MCF 10A (cell line): ENCODE measurements at regions of chr7 and their contacts with region 1.

Region 1: GRCh38 chr7:105652359-105652993 is 71.2 kb upstream of the EFCAB10 start:
- DNase-seq: peak; percentile 62
- H3K4me3 Mint-ChIP-seq: no peak overlapping the region
- H3K27ac Mint-ChIP-seq: no peak overlapping the region
- H3K4me1 Mint-ChIP-seq: peaks cover 10% of the 10 kb centered on the region
- H3K27me3 Mint-ChIP-seq: no peaks in the 10 kb centered on the region
- CTCF ChIP-seq: peak; percentile 79

Region 2: DNA sequence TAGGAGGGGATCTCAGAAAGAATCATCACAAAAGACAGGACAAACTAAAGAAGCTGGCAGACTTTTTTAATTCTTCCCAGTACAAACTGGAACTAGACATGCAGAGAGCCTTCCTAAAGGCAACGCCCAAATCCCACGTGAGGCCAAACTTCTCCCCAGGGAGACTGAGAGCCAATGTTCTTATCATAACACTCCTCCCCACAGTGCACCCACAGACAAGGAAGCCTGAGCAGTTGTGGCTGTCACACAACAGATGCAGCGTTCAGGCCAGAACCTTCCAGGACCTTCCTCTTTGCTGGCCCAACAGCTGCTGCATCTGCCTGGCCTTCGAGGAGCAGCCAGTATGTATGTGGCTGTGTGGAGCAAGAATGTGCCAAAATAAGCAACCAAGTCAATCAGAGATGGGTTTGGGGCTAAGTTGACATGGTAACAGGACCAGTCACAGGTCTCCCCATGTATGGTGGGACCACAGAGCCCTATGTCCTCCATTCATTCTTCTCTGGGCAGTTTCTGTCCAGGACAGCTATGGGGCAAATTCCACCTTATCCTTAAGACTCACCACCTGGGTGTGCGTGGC is 298.6 kb before region 1 on chr7:
- CTCF ChIA-PET with region 1: no interaction called
- POLR2A ChIA-PET with region 1: no interaction called
- intact Hi-C with region 1: no loop called
- DNase-seq: no peak
- H3K4me3 Mint-ChIP-seq: no peak overlapping the region
- H3K27ac Mint-ChIP-seq: no peak overlapping the region
- H3K4me1 Mint-ChIP-seq: peaks cover 32% of the 10 kb centered on the region
- H3K27me3 Mint-ChIP-seq: no peaks in the 10 kb centered on the region
- CTCF ChIP-seq: no peak

Region 3: DNA sequence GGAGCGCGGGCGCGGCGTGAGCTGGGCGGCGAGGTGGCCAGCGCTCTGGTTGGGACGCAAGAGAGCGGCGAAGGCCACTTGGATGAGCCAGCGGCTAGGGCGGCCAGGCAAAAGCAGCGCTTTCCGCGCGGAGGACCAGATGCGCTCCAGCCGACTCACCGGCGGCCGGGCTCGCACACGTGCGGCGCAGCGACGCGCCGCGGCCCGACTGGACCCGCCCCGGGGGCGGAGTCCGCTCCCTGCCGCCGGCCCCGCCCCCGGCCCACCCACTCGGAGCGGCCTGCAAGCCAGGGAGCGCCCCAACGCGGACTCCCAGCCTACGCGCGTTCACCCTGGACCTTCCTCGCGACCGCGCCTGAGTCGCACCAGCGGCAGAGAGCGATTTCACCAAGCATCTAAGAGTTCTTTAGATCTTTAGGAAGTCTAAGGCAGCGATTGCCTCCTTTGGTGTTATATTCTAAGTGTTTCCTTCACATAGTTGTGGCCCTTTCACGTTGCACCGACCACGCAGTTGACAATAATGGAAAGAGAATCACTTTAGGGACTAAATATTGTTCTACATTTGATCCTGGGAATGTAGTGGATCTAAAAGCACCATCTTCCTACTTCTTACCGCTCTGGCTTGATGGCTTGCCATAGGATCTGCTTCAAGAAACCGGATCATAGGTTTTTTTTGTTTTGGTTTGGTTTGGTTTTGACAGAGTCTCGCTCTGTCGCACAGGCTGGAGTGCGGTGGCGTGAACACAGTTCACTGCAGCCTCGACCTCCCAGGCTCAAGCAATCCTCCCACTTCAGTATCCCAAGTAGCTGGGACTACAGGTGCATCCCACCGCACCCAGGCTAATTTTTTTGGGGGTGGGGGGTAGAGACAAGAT is 130.2 kb before region 1 on chr7 and contains the start of gene PUS7:
- CTCF ChIA-PET with region 1: no interaction called
- POLR2A ChIA-PET with region 1: no interaction called
- intact Hi-C with region 1: no loop called
- DNase-seq: peak; percentile 87
- H3K4me3 Mint-ChIP-seq: peak within 1 kb of the TSS; percentile 86
- H3K27ac Mint-ChIP-seq: no peak within 1 kb of the TSS
- H3K4me1 Mint-ChIP-seq: peaks cover 6% of the 10 kb centered on the region
- H3K27me3 Mint-ChIP-seq: no peaks in the 10 kb centered on the region
- CTCF ChIP-seq: no peak
- total RNA-seq, gene PUS7: 24.3 and 29.7 TPM in 2 replicates

Region 4: DNA sequence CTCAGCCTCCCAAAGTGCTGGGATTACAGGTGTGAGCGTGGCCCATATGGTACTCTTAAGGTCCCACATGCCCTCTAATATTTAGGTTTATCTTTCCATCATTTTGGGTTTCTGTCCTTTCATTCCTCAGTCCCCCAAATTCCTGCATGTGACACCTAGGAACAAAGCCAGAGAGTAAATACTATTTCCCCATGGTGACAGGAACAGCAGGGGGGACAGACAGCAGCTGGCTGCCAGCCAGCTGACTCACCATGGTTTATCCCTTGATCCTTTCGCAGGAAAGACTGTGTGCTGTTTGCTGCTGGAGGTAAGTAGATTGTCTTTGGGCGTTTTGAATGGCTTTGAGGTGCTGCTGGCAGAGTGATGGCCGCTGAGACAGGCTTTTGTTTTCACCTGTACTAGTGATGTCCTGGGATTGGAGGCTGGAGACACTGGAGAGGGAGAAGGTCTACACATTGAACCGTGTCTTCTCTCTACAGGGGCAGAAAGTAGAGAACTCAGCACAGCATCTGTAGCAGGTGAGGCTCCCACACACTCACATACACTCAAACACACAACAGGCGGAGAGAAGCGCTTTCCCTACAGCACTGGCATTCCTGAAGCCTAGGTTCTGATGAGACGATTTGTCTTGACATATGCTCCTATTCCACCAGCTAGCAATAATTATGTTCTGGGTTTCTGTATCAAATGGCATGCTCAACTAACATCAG is 12.5 kb after region 1 on chr7:
- CTCF ChIA-PET with region 1: interaction called, 36 read pairs
- POLR2A ChIA-PET with region 1: no interaction called
- intact Hi-C with region 1: no loop called
- DNase-seq: peak; percentile 50
- H3K4me3 Mint-ChIP-seq: no peak overlapping the region
- H3K27ac Mint-ChIP-seq: no peak overlapping the region
- H3K4me1 Mint-ChIP-seq: peaks cover 6% of the 10 kb centered on the region
- H3K27me3 Mint-ChIP-seq: no peaks in the 10 kb centered on the region
- CTCF ChIP-seq: no peak

Region 5: DNA sequence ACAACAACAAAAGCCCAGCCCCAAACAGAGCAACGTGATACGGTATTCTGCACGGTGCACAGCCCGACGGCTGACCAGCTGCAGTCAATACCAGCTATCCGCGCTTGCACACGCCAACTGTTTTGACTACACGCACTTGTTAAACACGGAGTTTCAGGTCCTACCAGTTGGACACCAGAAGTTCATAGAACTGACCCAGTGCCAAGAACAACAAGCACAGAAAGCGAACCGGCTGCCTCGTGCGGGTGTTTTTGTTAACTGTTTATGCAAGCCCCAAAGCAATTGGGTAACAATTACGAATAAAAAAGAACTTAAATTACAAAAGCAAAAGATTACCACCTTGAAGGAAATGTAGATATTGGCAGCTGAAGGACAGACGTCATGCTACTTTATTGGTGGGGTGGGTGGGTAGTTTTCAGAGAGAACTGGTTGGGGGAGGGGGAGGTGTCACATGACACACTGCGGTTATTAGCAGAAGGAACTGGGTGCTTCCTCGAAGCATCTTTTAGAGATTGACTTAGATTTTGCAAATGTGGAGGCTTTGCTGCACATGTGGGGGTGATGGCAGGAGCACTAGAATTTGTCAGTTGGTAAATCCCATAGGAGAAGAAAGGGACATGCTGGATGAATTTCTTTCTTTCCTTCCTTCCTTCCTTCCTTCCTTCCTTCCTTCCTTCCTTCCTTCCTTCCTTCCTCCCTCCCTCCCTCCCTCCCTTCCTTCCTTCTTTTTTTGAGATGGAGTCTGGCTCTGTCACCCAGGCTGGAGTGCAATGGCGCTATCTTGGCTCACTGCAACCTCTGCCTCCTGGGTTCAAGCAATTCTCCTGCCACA is 39.5 kb after region 1 on chr7:
- CTCF ChIA-PET with region 1: interaction called, 10 read pairs
- POLR2A ChIA-PET with region 1: no interaction called
- intact Hi-C with region 1: no loop called
- DNase-seq: peak; percentile 92
- H3K4me3 Mint-ChIP-seq: peak overlapping the region; percentile 65
- H3K27ac Mint-ChIP-seq: peak overlapping the region; percentile 32
- H3K4me1 Mint-ChIP-seq: peaks cover 30% of the 10 kb centered on the region
- H3K27me3 Mint-ChIP-seq: no peaks in the 10 kb centered on the region
- CTCF ChIP-seq: no peak

Region 6: DNA sequence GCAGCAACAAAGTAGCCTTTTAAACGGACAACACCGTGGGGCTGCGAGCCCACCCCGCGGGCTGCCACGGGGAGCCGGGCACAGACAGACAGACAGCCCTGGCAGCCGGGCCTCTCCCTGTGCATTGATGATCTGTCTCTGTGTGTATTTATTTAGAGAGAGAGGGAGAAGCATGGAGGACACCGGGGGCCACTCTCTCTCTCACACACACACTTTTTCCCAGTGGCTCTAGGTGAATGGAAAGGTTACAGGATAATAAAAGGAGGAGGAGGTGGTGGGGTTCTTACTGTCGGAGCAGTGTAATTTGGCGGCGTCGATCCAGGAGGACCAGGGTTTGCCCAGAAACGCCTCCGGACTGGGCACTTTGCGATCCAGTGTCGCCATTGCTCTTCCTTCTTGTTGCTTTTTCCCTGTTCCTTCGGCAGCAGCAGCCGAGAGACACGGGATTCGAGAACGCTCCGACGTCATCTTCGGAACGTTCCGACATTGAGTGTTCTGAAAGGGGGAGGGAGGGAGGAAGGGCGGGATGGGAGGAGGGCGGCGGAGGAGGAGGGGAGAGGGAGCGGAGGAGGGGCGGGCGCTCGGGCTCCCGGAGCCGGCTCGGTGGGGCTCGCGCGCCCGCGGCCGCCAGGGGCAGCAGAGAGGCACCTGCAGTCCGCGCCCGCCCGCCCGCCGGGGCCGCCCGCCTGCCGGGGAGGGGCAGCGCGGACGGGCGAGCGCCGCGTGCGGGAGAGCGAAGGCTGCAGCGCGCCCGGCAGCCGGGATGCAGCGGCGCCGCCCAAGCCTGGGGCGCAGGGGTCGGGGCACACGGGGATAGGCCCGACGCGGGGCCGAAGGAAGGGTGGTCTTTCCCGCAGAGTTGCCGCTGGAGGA is 223.9 kb after region 1 on chr7 and contains the start of gene ATXN7L1:
- CTCF ChIA-PET with region 1: interaction called, 4 read pairs
- POLR2A ChIA-PET with region 1: interaction called, 4 read pairs
- intact Hi-C with region 1: loop called (anchors 10 kb)
- DNase-seq: peak; percentile 98
- H3K4me3 Mint-ChIP-seq: peak within 1 kb of the TSS; percentile 87
- H3K27ac Mint-ChIP-seq: peak within 1 kb of the TSS; percentile 97
- H3K4me1 Mint-ChIP-seq: peaks cover 5% of the 10 kb centered on the region
- H3K27me3 Mint-ChIP-seq: no peaks in the 10 kb centered on the region
- CTCF ChIP-seq: peak; percentile 50
- total RNA-seq, gene ATXN7L1: 8.1 and 10.0 TPM in 2 replicates

Region 7: GRCh38 chr7:106009403-106010226 is 357.1 kb after region 1 on chr7:
- CTCF ChIA-PET with region 1: interaction called, 5 read pairs
- POLR2A ChIA-PET with region 1: no interaction called
- intact Hi-C with region 1: loop called (anchors 1 kb)
- DNase-seq: peak; percentile 89
- H3K4me3 Mint-ChIP-seq: peak overlapping the region; percentile 32
- H3K27ac Mint-ChIP-seq: no peak overlapping the region
- H3K4me1 Mint-ChIP-seq: peaks cover 14% of the 10 kb centered on the region
- H3K27me3 Mint-ChIP-seq: no peaks in the 10 kb centered on the region
- CTCF ChIP-seq: peak; percentile 96

Region 8: GRCh38 chr7:106166655-106167342 is 514.3 kb after region 1 on chr7:
- CTCF ChIA-PET with region 1: interaction called, 3 read pairs
- POLR2A ChIA-PET with region 1: no interaction called
- intact Hi-C with region 1: loop called (anchors 5 kb)
- DNase-seq: peak; percentile 83
- H3K4me3 Mint-ChIP-seq: no peak overlapping the region
- H3K27ac Mint-ChIP-seq: no peak overlapping the region
- H3K4me1 Mint-ChIP-seq: no peaks in the 10 kb centered on the region
- H3K27me3 Mint-ChIP-seq: no peaks in the 10 kb centered on the region
- CTCF ChIP-seq: peak; percentile 77